Activated CD8-positive, alpha-beta T cell treated with anti-CD3 and anti-CD28 coated beads, Interleukin-2, amount 10 ng/mL, durations not matched to agents 7 days and 5 days (primary cell): ENCODE measurements at regions of chr22 and their contacts with region 1.

Region 1: GRCh38 chr22:38681784-38682335 is at the start of gene TOMM22:
- DNase-seq: peak; percentile 89
- ATAC-seq: peak; percentile 97
- H3K4me3 Mint-ChIP-seq: peak within 1 kb of the TSS; percentile 96
- H3K27ac Mint-ChIP-seq: peak within 1 kb of the TSS; percentile 95
- H3K4me1 Mint-ChIP-seq: peaks cover 23% of the 10 kb centered on the region
- H3K27me3 Mint-ChIP-seq: no peaks in the 10 kb centered on the region
- total RNA-seq, gene TOMM22: 91.3 to 98.7 TPM

Region 2: GRCh38 chr22:38578505-38578904 is 103.4 kb before region 1 on chr22:
- CTCF ChIA-PET with region 1: no interaction called
- POLR2A ChIA-PET with region 1: no interaction called
- DNase-seq: no peak
- ATAC-seq: no peak
- H3K4me3 Mint-ChIP-seq: no peak overlapping the region
- H3K27ac Mint-ChIP-seq: no peak overlapping the region
- H3K4me1 Mint-ChIP-seq: no peaks in the 10 kb centered on the region
- H3K27me3 Mint-ChIP-seq: peaks cover 2% of the 10 kb centered on the region

Region 3: DNA sequence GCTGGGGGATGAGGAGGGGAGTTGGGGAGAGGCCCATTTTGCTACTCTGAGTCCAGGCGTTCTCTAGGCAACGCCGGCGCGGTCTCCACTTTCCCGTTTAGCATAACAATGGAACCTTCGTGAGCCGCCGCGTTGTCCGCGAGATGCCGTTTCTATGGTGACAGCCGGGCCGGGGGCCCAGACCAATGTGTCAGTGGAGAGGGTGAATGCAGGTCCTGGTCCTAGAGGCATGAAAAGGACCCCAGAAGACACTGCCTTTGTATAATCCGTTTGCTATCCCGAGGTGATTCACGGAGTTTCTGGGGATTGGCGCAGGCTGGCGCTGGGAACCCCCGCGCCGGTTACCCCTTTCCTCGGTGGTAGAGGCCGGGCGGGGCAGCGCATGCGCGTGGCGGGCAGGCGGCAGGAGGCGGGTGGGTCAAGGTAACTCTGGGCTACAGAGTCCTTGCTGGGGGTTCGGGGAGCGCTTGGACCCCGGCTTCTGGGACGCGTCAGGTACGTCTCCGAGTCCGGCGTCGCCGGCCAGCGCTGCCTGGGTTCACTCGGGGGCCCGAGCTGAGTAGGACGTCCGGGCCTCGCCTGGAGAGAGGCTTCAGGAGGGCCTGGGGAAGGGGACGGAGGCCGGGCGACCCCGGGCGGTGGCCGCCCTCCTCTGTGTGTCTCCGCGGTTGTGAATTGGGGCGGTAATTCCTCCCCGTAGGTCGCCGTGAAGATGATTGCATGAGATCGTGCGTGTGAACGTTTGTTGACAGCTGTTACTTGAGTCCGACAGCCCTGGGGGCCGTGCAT is 25.4 kb before region 1 on chr22 and contains the starts of genes CBY1 and FAM227A:
- CTCF ChIA-PET with region 1: interaction called, 9 read pairs
- POLR2A ChIA-PET with region 1: interaction called, 21 read pairs
- DNase-seq: peak; percentile 87
- ATAC-seq: peak; percentile 84
- H3K4me3 Mint-ChIP-seq: peak within 1 kb of the TSS; percentile 91
- H3K27ac Mint-ChIP-seq: peak within 1 kb of the TSS; percentile 98
- H3K4me1 Mint-ChIP-seq: peaks cover 19% of the 10 kb centered on the region
- H3K27me3 Mint-ChIP-seq: no peaks in the 10 kb centered on the region
- total RNA-seq, gene CBY1: 11.6 to 13.6 TPM
- total RNA-seq, gene FAM227A: 0.87 to 0.89 TPM

Region 4: DNA sequence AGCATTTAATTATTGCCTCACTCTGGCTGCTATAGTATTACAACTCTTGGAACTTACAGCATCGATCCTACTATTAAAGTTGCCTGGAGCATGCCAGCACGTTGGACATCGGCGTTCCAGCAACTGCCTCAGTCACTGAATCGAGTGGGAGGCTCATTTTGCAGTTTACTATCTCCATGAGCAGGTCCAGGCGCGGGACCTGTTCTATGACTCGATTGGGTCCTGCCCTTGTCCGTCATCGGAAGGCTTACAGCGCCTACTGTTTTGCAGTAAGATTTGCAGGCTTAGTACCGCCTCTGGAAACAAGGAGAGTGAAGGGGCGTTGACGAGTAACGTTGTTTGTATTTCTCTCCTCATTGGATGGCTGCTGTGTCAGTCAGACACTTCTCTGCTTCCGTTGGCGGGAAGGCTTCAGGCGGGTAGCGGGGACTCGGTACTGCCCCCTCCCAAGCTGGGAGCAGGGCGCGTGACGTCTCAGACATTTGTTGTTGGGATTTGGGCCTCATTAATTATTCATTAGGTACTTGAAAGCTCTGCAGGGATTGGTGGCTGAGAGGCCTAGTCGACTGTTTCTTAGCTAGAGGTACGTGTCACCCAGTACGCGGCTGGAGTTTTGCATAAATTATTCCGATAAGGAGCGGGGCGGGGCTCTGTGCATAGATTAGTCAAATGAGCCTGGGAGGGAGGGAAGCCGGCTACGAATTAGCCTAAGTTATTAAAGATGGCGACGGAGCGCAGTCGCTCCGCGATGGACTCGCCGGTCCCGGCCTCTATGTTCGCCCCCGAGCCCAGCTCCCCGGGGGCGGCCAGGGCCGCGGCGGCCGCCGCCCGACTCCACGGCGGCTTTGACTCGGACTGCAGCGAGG is 23.6 kb after region 1 on chr22 and contains the start of gene GTPBP1:
- CTCF ChIA-PET with region 1: interaction called, 36 read pairs
- POLR2A ChIA-PET with region 1: interaction called, 67 read pairs
- DNase-seq: peak; percentile 99
- ATAC-seq: peak; percentile 86
- H3K4me3 Mint-ChIP-seq: peak within 1 kb of the TSS; percentile 93
- H3K27ac Mint-ChIP-seq: peak within 1 kb of the TSS; percentile 96
- H3K4me1 Mint-ChIP-seq: peaks cover 47% of the 10 kb centered on the region
- H3K27me3 Mint-ChIP-seq: no peaks in the 10 kb centered on the region
- total RNA-seq, gene GTPBP1: 71.8 to 73.9 TPM

Region 5: DNA sequence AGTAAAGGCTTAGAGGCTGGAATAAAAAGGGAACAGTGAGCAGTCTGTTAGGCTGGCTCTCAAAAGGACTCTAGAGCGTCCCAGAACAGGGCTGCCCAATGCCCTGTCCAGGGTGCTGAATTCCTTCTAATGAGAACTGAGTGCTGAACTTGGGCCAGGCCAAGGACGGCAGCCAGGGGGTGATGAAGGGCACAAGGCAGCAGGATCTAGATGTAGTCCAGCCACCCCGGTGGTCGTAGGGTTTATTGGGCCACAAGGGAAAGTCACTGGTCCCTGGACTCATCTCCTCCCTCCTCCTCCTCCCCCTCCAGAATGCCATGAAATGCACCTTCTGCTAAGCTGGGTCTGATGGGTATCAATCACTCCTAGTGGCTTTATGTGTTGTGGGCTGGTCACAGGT is 142.7 kb after region 1 on chr22:
- CTCF ChIA-PET with region 1: no interaction called
- POLR2A ChIA-PET with region 1: no interaction called
- DNase-seq: peak; percentile 81
- ATAC-seq: peak; percentile 91
- H3K4me3 Mint-ChIP-seq: no peak overlapping the region
- H3K27ac Mint-ChIP-seq: no peak overlapping the region
- H3K4me1 Mint-ChIP-seq: no peaks in the 10 kb centered on the region
- H3K27me3 Mint-ChIP-seq: no peaks in the 10 kb centered on the region